Activated CD8-positive, alpha-beta T cell treated with anti-CD3 and anti-CD28 coated beads for 36 hours (primary cell): ENCODE measurements at regions of chr20 and their contacts with region 1.

Region 1: DNA sequence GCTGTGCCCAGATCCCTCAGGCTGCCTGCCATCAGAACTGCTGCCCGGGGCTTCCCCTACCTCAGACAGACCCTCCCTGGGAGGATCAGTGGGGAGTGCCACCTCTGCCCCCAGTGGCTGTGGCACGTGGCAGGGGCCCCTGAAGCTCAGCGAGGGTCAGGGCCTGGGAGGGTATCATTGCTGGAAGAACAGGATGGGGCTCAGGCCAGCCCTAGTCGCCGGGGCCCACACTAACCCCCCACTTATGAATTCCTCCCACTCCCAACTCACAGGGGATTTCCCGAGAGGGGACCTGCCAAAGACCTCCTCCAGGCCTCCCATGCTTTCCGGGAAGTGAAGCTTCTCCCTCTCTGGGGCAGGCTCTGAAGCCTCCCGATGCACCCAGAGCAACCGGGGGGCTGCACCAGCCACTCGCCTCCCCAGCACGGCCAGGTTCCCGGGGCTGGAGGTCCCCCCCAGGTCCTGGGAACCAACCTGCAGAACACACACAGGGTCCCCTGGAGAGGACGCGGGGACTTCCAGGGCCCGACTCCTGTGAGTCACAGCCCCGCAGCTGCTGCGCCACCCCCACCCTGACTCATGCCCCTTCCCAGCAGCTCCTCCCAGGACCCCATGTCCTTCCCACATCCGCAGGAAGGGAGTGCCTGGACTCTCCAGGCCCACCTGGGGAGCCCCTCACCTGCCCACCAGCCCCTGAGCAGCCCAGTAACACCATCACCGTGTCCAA is 2.5 kb downstream of the TNFRSF6B start:
- DNase-seq: peak; percentile 72
- ATAC-seq: peak; percentile 55
- H3K4me3 Mint-ChIP-seq: no peak overlapping the region
- H3K27ac Mint-ChIP-seq: peak overlapping the region; percentile 67
- H3K4me1 Mint-ChIP-seq: peaks cover 23% of the 10 kb centered on the region
- H3K27me3 Mint-ChIP-seq: no peaks in the 10 kb centered on the region
- CTCF ChIP-seq: no peak

Region 2: DNA sequence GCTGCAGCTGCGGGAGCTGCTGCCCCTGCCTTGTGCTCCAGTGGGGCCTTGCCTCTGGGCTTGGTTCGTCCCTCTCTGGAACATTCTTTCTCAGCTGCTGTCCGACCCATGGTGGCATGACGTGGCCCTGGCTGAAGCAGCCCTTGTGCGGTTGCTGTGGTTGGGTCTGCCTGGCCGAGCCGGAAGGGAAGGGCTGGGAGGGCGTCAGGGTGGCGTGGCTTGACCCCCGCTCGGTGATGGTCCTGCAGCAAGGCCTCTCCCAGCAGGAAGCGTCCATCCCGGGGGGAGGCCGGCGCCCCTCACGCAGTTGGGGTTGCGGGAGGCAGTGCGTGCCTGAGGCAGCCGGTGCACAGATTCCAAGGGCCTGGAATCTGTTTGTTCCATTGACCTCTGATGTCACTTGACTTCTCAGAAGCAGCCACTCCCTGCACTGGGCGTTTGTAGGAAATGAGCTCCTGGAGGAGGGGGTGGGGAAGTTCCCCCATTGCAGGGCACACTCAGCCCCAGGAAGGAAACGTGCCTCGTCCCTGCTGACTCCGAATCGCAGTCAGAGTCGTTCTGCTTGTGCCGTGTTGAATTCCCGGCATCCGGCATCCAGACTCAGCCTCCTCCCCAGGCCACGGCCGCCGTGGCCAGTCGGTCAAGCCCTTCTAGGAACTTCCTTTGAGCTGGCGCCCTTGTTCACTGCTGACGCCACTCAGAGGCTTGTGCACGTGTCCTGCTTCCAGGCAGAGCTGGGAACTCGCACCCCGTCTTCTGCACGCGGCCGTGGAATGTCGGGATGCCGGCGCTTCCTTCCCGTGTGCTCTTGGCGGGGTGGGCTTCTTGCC is 12.2 kb before region 1 on chr20:
- CTCF ChIA-PET with region 1: no interaction called
- POLR2A ChIA-PET with region 1: interaction called, 13 read pairs
- intact Hi-C with region 1: no loop called
- DNase-seq: peak; percentile 70
- ATAC-seq: peak; percentile 78
- H3K4me3 Mint-ChIP-seq: no peak overlapping the region
- H3K27ac Mint-ChIP-seq: peak overlapping the region; percentile 71
- H3K4me1 Mint-ChIP-seq: peaks cover 16% of the 10 kb centered on the region
- H3K27me3 Mint-ChIP-seq: no peaks in the 10 kb centered on the region
- CTCF ChIP-seq: no peak

Region 3: DNA sequence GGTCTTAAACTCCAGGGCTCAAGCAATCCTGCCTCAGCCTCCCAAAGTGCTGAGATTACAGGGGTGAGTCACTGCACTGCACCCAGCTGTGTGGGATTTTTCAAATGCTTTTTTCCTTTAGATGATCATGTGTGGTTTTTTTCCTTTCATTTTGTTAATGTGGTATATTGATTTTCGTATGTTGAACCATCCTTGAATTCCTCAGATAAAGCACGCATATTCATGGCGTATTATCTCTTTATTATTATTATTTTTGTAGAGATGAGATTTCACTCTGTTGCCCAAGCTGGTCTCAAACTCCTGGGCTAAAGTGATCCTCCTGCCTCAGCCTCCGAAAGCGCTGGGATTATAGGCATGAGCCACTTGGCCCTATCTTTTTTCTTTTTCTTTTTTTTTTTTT is 16.0 kb after region 1 on chr20:
- CTCF ChIA-PET with region 1: no interaction called
- POLR2A ChIA-PET with region 1: no interaction called
- intact Hi-C with region 1: no loop called
- DNase-seq: no peak
- ATAC-seq: no peak
- H3K4me3 Mint-ChIP-seq: no peak overlapping the region
- H3K27ac Mint-ChIP-seq: no peak overlapping the region
- H3K4me1 Mint-ChIP-seq: peaks cover 41% of the 10 kb centered on the region
- H3K27me3 Mint-ChIP-seq: no peaks in the 10 kb centered on the region
- CTCF ChIP-seq: no peak